ENCODE measurements at regions of chr16 and their contacts with region 1.

Region 1: GRCh38 chr16:57091975-57092785 is at the start of gene CPNE2:
- DNase-seq: peak; percentile 69 to 91 (median 87)
- ATAC-seq: peak; percentile 74 to 88
- H3K4me3 ChIP-seq: peak within 1 kb of the TSS; percentile 98
- H3K27ac ChIP-seq: peak within 1 kb of the TSS; percentile 82
- H3K4me1 ChIP-seq: no peaks in the 10 kb centered on the region
- H3K27me3 ChIP-seq: no peaks in the 10 kb centered on the region
- total RNA-seq, gene CPNE2: 13.4 to 16.3 (median 13.6) TPM

Region 2: DNA sequence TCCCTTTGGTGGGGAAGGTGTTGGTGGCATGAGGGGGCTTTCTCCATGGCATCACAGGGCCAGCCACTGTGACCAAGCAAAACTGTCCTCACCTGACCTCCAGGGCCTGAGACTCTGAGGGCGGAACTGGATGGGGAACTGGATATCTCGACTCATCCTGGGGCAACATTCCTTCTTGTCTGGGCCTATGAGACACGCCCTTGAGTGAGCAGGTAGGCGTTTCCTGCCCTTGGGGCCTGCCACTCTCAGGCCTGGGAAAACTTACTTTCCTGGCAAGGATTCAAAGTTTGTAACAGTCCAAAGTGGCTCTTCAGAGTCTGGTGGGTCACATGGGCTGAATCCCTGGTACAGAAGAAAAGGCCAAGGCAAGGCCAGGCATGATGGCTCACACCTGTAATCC is 400.3 kb before region 1 on chr16:
- intact Hi-C with region 1: no loop called
- DNase-seq: no peak
- ATAC-seq: peak; percentile 53 to 69
- H3K4me3 ChIP-seq: no peak overlapping the region
- H3K27ac ChIP-seq: no peak overlapping the region
- H3K4me1 ChIP-seq: no peaks in the 10 kb centered on the region
- H3K27me3 ChIP-seq: no peaks in the 10 kb centered on the region

Region 3: GRCh38 chr16:57013229-57013628 is 79.0 kb before region 1 on chr16:
- intact Hi-C with region 1: no loop called
- DNase-seq: no peak
- ATAC-seq: no peak
- H3K4me3 ChIP-seq: no peak overlapping the region
- H3K27ac ChIP-seq: no peak overlapping the region
- H3K4me1 ChIP-seq: no peaks in the 10 kb centered on the region
- H3K27me3 ChIP-seq: no peaks in the 10 kb centered on the region

Region 4: GRCh38 chr16:57147381-57148221 is 55.4 kb after region 1 on chr16:
- intact Hi-C with region 1: loop called in 2 of 4 experiments (anchors 10 kb)
- DNase-seq: peak in 2 of 3 donors; percentile 68 to 69
- ATAC-seq: peak; percentile 9 to 21
- H3K4me3 ChIP-seq: no peak overlapping the region
- H3K27ac ChIP-seq: peak overlapping the region; percentile 37
- H3K4me1 ChIP-seq: peaks cover 6% of the 10 kb centered on the region
- H3K27me3 ChIP-seq: no peaks in the 10 kb centered on the region

Measured in right cardiac atrium (tissue), 5 donors.